Activated CD8-positive, alpha-beta memory T cell treated with anti-CD3 and anti-CD28 coated beads, Interleukin-2, amount 10 ng/mL, durations not matched to agents 7 days and 5 days (primary cell): ENCODE measurements at regions of chr16 and their contacts with region 1.

Region 1: GRCh38 chr16:29757950-29758466 is 12.2 kb upstream of the C16orf54 start:
- DNase-seq: no peak
- ATAC-seq: no peak
- H3K4me3 Mint-ChIP-seq: no peak overlapping the region
- H3K27ac Mint-ChIP-seq: no peak overlapping the region
- H3K4me1 Mint-ChIP-seq: peaks cover 14% of the 10 kb centered on the region
- H3K27me3 Mint-ChIP-seq: peaks cover 2% of the 10 kb centered on the region

Region 2: DNA sequence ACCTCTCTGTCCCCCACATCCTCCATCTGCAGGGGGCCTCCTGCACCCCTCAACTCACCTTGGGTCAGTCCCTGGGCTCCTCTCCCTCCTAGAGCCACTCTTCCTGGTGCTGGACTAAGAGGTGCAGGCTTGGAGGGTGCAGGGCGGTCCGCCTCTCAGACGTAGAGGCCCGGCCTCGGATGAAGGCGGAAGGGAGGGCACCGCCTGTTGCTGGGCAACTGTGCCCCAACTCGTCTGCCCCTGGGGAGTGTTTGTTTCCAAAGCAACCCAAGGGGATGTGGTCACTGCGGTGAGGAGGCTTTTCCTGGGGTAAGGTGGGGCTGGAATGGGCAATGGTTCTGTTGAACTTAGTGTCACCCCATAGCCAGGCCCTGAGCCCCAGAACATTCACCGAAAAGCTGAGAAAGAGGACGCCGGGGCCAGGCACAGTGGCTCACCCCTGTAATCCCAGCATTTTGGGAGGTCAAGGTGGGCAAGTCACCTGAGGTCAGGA is 12.1 kb before region 1 on chr16 and contains the start of gene C16orf54:
- CTCF ChIA-PET with region 1: interaction called, 10 read pairs
- DNase-seq: peak; percentile 98
- ATAC-seq: peak; percentile 89
- H3K4me3 Mint-ChIP-seq: peak within 1 kb of the TSS; percentile 99
- H3K27ac Mint-ChIP-seq: peak within 1 kb of the TSS; percentile 98
- H3K4me1 Mint-ChIP-seq: peaks cover 55% of the 10 kb centered on the region
- H3K27me3 Mint-ChIP-seq: peaks cover 3% of the 10 kb centered on the region
- total RNA-seq, gene C16orf54: 39.7 to 51.2 TPM

Region 3: GRCh38 chr16:29802416-29802935 is 44.5 kb after region 1 on chr16:
- CTCF ChIA-PET with region 1: no interaction called
- DNase-seq: no peak
- ATAC-seq: no peak
- H3K4me3 Mint-ChIP-seq: no peak overlapping the region
- H3K27ac Mint-ChIP-seq: no peak overlapping the region
- H3K4me1 Mint-ChIP-seq: peaks cover 23% of the 10 kb centered on the region
- H3K27me3 Mint-ChIP-seq: no peaks in the 10 kb centered on the region

Region 4: GRCh38 chr16:29816694-29817441 is 58.9 kb after region 1 on chr16:
- CTCF ChIA-PET with region 1: no interaction called
- DNase-seq: peak; percentile 84
- ATAC-seq: peak; percentile 41
- H3K4me3 Mint-ChIP-seq: peak overlapping the region; percentile 99
- H3K27ac Mint-ChIP-seq: peak overlapping the region; percentile 88
- H3K4me1 Mint-ChIP-seq: peaks cover 62% of the 10 kb centered on the region
- H3K27me3 Mint-ChIP-seq: peaks cover 9% of the 10 kb centered on the region